Right ventricle myocardium superior (tissue), 1 donor: ENCODE measurements at regions of chr20 and their contacts with region 1.

Region 1: DNA sequence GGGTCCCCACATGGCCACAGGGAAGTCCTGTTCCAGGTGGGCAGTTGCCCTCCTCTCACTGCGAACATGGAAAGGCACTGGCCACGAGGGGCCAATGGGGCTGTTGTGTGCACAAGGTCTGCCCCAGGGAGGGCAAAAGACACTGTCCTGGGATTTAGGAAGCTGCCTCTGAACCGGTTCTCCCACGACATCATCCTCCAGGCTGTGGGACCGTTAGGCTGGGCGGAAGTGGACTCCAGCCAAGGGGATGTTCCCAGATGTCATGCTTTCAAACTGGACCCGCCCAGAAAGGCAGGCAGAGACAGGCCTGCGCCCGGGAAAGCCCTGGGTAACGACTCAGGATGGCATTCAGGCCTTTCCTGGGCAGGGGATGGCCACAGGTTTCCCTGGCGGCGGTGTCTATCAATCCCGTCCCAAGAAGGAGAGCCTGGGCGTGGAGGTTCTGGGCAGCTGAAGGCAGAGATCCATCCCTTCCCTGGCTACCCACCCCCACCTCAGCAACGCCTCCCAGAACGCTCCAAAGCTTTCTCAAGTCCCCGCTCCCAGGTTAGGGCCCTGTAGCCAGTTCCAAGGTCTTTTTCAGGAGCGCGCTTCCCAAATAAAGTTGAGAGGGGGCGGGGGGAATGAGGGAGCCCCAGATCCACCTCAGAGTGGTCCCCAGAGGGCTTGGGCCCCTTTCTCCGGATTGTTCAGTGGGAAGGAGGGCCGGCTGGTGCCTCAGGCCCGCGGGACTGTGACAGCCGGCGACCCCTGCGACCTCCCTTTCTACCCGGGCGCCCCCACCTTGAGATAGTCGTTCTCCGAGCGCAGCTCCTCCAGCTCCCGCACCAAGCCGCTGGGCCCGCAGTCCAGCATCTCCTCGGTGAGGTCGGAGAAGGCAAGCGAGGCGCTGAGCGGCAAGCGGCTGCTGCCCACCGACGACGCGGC is 13.8 kb upstream of the TLDC2 start:
- DNase-seq: peak; percentile 91
- ATAC-seq: peak; percentile 64

Region 2: DNA sequence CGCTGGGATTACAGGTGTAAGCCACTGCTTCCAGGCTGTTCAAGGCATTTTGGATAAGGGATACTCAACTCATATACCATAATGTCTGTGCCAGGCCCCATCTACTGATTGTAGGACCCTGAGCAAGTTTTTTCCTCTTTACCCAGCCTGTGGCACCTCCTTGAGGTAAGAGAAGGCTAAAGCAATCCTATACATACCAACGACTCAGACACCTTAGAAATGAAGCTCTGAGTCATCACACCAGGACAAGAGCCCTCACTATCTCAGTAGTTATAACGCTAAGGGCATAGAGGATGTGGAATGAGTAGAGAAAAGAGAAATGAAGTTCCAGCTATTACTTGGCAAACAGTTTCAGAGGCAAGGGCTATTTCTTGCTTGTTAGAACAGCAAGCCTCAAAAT is 133.2 kb before region 1 on chr20:
- intact Hi-C with region 1: no loop called
- DNase-seq: no peak
- ATAC-seq: no peak

Region 3: GRCh38 chr20:36773597-36774390 is 88.3 kb before region 1 on chr20 and contains the start of gene DSN1:
- intact Hi-C with region 1: loop called (anchors 5 kb)
- DNase-seq: peak; percentile 100
- ATAC-seq: peak; percentile 98
- total RNA-seq, gene DSN1: 3.5 TPM

Region 4: GRCh38 chr20:36830791-36831691 is 31.1 kb before region 1 on chr20:
- intact Hi-C with region 1: loop called (anchors 2 kb)
- DNase-seq: peak; percentile 89
- ATAC-seq: peak; percentile 69